GM18951 (cell line): ENCODE measurements at regions of chr5 and their contacts with region 1.

Region 1: GRCh38 chr5:170100066-170100943 is 5.4 kb upstream of the FOXI1 start:
- POLR2A ChIP-seq: no peak

Region 2: GRCh38 chr5:169367861-169368260 is 732.4 kb before region 1 on chr5:
- in situ Hi-C with region 1: no loop called
- POLR2A ChIP-seq: no peak

Region 3: GRCh38 chr5:170183816-170184687 is 83.7 kb after region 1 on chr5:
- in situ Hi-C with region 1: loop called (anchors 10 kb)
- POLR2A ChIP-seq: no peak

Region 4: GRCh38 chr5:170195961-170196360 is 95.7 kb after region 1 on chr5:
- in situ Hi-C with region 1: no loop called
- POLR2A ChIP-seq: no peak